Right ventricle myocardium superior (tissue), 1 donor: ENCODE measurements at regions of chr10 and their contacts with region 1.

Region 1: DNA sequence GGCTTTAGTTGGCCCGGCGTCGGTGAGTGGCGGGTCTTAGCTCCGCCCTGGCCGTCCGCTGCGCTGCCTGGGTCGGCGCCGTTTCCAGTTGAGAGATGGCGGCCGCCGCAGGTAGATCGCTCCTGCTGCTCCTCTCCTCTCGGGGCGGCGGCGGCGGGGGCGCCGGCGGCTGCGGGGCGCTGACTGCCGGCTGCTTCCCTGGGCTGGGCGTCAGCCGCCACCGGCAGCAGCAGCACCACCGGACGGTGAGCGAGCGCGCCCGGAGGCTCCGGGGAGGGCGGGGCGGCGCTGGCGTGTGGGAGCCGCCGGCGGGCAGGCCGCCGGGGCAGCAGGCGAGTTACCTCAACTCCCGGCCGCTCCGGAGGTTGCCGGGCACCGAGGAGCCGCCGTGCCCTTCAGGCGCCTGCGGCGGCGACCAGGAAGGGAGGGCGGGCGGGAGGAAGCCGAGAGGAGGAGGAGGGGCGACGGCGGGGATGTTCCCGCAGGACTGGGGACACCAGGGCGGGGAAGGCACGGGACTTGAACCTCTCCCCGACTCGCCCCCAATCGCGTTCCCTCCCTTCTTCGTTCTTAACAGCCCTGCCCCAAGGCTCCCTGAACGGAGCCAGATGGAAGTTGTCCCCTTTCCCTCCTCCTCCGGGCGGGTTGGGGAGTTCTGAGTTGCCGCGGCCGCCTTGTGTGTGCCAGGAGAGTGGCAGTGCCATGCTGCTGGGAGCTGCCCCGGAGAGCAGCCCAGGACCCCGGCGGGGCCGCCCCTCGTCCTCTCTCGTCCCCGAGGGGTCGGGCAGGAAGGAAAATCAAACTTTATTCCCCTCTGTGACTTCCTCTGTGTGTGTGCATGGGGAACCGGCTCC is at the start of gene MCU:
- DNase-seq: peak; percentile 96
- ATAC-seq: peak; percentile 98
- total RNA-seq, gene MCU: 11.3 TPM

Region 2: DNA sequence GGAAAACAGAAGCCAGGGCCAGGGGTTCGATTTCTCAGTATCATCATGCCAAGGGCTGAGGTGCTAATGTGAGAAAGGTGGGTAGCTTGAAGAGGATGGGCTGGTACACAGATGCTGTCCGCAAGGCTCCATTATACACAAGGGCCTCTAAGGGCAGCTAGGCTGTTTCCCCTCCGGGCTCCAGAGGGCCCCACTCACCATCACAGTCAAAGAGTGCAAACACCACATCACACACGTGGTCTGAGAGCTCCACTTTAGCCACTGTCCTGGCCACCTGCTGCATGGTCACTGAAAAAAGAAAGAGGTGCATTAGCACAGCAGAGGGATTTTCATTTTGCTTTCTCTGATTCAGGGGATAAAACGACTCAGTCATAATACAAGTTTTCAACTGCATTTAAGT is 316.7 kb before region 1 on chr10:
- intact Hi-C with region 1: loop called (anchors 10 kb)
- DNase-seq: no peak
- ATAC-seq: no peak

Region 3: GRCh38 chr10:72542396-72542815 is 149.9 kb before region 1 on chr10:
- intact Hi-C with region 1: no loop called
- DNase-seq: no peak
- ATAC-seq: no peak

Region 4: DNA sequence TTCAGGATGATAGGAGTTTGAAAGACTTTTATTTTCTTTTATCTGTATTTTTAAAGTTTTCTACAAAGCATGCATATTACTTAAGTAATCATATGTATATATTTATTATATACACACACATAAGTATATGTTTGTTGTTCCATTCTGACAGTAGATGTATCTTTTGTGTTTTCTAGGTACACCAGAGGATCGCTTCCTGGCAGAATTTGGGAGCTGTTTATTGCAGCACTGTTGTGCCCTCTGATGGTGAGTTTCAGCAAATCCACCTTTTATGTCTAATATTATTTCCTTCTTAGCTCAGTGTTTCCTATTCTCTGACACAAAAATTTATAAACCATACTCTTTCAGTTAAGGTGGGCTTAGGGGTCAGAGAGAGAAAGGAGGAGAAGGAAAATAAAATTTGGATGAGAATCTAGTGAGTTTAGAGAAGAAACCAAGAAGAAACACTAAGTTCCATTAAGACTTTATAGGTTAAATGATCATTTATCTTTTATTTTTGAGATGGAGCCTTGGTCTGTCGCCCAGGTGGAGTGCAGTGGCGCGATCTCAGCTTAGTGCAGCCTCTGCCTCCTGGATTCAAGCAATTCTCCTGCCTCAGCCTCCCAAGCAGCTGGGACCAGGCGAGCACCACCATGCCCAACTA is 142.0 kb after region 1 on chr10:
- intact Hi-C with region 1: loop called (anchors 5 kb)
- DNase-seq: no peak
- ATAC-seq: peak; percentile 80